ENCODE measurements at regions of chr11 and their contacts with region 1.

Region 1: GRCh38 chr11:65569973-65570918 is at the start of gene ZNRD2:
- DNase-seq: peak; percentile 100
- H3K4me3 Mint-ChIP-seq: peak within 1 kb of the TSS; percentile 97
- H3K27ac Mint-ChIP-seq: peak within 1 kb of the TSS; percentile 99
- H3K4me1 Mint-ChIP-seq: peaks cover 57% of the 10 kb centered on the region
- H3K27me3 Mint-ChIP-seq: no peaks in the 10 kb centered on the region
- total RNA-seq, gene ZNRD2: 83.3 and 83.4 TPM in 2 replicates

Region 2: DNA sequence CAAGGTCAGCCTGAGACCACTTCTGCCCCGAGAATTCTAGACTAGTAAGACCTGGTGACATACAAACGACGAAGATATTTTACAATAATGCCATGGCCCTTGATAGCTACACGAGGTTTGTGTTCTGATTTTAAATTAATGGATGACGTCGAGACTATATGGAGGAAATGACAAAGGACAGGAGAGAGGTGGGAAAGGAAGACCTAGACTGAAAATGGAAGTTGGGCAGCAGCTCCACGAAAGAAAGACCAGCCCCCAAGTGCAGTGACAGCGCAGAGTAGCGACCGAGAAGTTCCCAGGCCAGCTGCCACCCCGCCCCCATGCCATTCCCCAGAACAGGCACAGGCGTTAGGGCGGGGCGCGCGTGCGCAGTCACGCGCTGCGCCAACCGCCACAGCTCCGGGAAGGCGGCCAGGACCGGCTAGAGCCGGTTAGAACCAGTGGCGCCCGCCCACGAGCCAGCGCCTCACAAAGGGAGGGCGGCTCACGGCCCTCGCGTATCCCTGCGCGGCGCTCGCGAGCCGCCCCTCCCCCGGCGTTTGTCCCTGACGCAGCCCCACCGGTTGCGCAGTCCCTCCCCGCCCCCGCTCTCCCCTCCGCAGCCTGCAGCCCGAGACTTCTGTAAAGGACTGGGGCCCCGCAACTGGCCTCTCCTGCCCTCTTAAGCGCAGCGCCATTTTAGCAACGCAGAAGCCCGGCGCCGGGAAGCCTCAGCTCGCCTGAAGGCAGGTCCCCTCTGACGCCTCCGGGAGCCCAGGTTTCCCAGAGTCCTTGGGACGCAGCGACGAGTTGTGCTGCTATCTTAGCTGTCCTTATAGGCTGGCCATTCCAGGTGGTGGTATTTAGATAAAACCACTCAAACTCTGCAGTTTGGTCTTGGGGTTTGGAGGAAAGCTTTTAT is 72.9 kb before region 1 on chr11:
- intact Hi-C with region 1: loop called (anchors 1 kb)
- DNase-seq: peak; percentile 99
- H3K4me3 Mint-ChIP-seq: no peak overlapping the region
- H3K27ac Mint-ChIP-seq: no peak overlapping the region
- H3K4me1 Mint-ChIP-seq: peaks cover 44% of the 10 kb centered on the region
- H3K27me3 Mint-ChIP-seq: no peaks in the 10 kb centered on the region

Region 3: GRCh38 chr11:65551572-65552398 is 18.5 kb before region 1 on chr11:
- intact Hi-C with region 1: loop called (anchors 1 kb)
- DNase-seq: peak; percentile 89
- H3K4me3 Mint-ChIP-seq: peak overlapping the region; percentile 16
- H3K27ac Mint-ChIP-seq: peak overlapping the region; percentile 48
- H3K4me1 Mint-ChIP-seq: peaks cover 59% of the 10 kb centered on the region
- H3K27me3 Mint-ChIP-seq: no peaks in the 10 kb centered on the region

Region 4: GRCh38 chr11:65615229-65615941 is 45.1 kb after region 1 on chr11 and contains the start of gene PCNX3:
- intact Hi-C with region 1: loop called (anchors 1 kb)
- DNase-seq: peak; percentile 100
- H3K4me3 Mint-ChIP-seq: peak within 1 kb of the TSS; percentile 97
- H3K27ac Mint-ChIP-seq: peak within 1 kb of the TSS; percentile 93
- H3K4me1 Mint-ChIP-seq: peaks cover 34% of the 10 kb centered on the region
- H3K27me3 Mint-ChIP-seq: peaks cover 3% of the 10 kb centered on the region
- total RNA-seq, gene PCNX3: 52.0 and 55.1 TPM in 2 replicates

Region 5: GRCh38 chr11:65662799-65663638 is 92.8 kb after region 1 on chr11 and contains the start of gene RELA:
- intact Hi-C with region 1: loop called (anchors 1 kb)
- DNase-seq: peak; percentile 97
- H3K4me3 Mint-ChIP-seq: peak within 1 kb of the TSS; percentile 92
- H3K27ac Mint-ChIP-seq: peak within 1 kb of the TSS; percentile 93
- H3K4me1 Mint-ChIP-seq: peaks cover 24% of the 10 kb centered on the region
- H3K27me3 Mint-ChIP-seq: no peaks in the 10 kb centered on the region
- total RNA-seq, gene RELA: 95.7 and 98.2 TPM in 2 replicates

Region 6: DNA sequence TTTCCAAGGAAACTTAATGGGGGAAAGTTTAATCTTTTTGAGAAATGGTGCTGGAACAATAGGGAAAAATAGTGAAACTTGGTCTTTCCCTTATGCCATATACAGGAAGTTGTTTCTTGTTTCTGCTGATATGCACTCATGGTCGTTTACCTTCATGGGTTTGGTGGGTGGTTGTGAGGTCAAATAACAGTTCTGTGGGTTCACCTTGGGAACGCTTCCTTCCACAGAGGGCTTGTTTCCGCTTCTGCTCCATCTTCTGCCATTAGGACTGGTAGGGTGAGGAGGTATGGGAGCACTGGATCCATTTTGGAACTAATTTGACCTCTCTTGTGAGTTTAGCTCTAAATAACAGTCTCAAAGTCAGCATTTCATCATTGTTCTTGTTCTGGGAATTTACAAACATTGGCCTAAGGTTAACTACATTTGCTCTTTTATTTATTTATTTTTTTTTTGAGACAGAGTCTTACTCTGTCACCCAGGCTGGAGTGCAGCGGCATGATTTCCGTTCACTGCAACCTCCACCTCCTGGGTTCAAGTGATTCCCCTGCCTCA is 110.0 kb after region 1 on chr11:
- intact Hi-C with region 1: no loop called
- DNase-seq: no peak
- H3K4me3 Mint-ChIP-seq: no peak overlapping the region
- H3K27ac Mint-ChIP-seq: no peak overlapping the region
- H3K4me1 Mint-ChIP-seq: no peaks in the 10 kb centered on the region
- H3K27me3 Mint-ChIP-seq: peaks cover 12% of the 10 kb centered on the region

Region 7: DNA sequence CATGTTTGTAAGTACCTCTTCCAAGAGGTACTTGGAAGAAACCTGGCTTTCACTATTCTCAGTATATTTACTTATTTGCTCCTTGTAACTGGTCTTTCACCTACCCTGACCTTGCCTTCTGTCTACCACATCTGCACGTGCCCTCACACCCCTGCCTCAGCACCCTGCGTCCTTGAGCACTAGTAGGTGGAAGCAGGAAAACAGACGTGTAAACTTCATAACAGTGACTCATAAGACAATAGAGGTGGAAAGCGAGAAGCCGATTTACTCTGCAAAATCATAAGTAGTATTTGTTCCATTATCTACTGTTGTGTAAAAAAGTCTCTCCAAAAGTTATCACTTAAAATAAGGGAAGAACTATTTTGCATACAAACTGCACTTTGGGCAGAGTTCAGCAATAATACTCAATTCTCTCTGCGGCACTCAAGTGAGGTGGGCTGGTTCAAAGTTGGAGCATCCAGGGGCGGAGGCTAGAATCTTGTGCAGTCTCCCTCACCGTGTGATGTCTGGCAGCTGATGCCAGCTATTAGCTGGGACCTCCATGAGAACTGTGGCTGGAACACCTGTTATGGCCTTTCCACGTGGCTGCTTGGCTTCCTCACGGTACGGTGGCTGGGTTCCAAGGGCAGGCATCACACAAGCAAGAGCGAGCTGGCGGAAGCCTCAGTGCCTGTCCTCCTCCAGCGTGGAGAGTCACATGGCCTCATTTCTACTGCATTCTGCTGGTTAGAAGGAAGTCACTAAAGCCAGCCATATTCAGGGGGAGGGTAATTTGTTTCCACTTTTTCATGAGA is 530.2 kb after region 1 on chr11:
- intact Hi-C with region 1: no loop called
- DNase-seq: peak; percentile 91
- H3K4me3 Mint-ChIP-seq: peak overlapping the region; percentile 77
- H3K27ac Mint-ChIP-seq: peak overlapping the region; percentile 94
- H3K4me1 Mint-ChIP-seq: peaks cover 38% of the 10 kb centered on the region
- H3K27me3 Mint-ChIP-seq: no peaks in the 10 kb centered on the region